ENCODE measurements at regions of chr7 and their contacts with region 1.

Region 1: DNA sequence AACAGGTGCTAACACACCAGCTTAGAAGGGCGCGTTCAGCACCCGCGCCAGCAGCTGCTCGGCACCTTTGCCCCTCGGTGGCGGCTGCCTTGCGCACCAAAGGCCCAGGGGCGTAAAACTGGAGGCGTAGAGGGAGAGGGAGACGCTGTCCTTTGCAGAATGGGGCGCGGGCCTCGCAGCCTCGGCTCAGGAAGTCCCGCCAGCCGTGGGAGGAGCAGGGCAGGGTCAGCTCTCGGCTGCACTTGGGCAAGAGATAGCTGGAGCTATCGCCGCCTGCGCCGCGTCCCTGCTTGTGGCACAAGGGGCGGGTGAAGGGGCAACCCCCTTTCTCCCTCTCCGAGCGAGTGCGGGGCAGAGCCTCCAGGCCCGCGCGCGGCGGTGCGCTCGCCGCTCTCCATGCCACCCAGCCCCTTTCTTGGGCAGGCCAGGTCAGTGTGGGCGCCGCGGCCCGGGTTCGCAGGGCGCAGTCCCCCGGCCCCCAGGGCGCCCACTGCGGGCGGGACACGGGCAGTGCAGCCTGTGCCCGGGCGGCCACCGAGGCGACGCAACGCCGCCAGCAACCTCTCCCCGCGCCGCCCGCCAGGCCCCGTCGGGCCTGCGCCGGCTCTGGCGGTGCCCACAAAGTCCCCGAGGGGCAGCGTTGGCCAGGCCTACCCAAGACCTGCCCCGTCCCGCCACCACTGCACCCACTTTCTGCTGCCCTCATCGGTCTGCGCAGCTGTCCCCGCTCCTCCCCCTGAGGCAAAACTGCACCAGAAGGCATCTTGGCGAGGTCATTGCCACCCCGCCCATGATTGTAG is 4.1 kb downstream of the NEUROD6 start:
- DNase-seq: peak in 1 of 2 experiments; percentile 87
- H3K4me3 ChIP-seq: peak overlapping the region; percentile 37 to 63 (median 53)
- H3K27ac ChIP-seq: no peak overlapping the region
- H3K4me1 ChIP-seq: no peaks in the 10 kb centered on the region
- H3K27me3 ChIP-seq: peaks cover 7 to 30% (median 18%) of the 10 kb centered on the region in 4 experiments; a peak in 6 of 7 replicates
- CTCF ChIP-seq: peak; percentile 71 to 82 (median 80)
- EP300 ChIP-seq: no peak
- POLR2A ChIP-seq: no peak
- RAD21 ChIP-seq: peak; percentile 41 to 69

Region 2: DNA sequence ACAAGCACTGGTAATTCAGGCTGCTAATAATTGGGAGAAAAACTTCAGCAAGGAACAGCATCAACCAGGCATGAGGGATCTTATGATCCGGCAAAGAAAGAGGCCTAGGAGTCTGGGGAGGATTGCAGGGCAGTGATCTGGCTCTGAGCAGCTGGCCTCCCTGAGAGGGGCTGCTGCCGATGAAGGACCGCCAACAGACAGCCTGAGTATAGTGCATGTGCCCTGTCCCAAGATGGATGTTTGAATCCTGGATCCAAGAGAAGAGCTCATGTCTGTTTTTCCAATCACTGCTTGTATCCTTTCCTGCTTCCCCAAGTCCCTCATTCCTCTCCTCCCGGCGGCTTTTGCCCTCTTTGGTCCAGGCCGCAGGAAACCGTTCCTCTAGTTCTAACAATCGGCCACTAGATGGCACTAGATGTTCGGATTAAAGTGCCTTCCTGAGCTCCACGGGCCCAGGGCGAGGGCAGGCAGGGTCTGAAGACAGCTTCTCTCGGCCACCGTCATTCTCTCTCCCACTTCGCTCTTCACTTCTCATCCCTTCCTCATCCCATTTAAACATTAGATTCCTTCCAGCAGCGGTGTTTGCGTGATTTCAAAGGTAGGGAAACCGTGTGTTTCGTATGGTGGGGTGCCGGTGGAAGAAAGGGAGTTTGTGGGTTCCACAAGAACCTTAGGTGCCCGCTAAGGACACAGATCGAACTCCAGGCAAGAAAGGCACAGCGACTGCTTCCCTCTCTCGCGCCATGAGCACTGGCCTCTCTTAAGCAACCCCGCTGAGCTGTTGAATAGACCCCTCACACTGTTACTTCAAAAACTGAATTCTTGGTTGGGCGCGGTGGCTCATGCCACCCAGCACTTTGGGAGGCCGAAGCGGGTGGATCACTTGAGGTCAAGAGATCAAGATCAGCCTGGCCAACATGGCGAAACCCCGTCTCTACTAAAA is 201.9 kb before region 1 on chr7:
- CTCF ChIA-PET with region 1: interaction called, 14 read pairs
- POLR2A ChIA-PET with region 1: no interaction called
- DNase-seq: peak; percentile 56 to 84
- H3K4me3 ChIP-seq: peak overlapping the region in 1 of 4 experiments; percentile 26; a peak in 1 of 8 replicates
- H3K27ac ChIP-seq: no peak overlapping the region
- H3K4me1 ChIP-seq: no peaks in the 10 kb centered on the region; a peak in 1 of 7 replicates
- H3K27me3 ChIP-seq: no peaks in the 10 kb centered on the region
- CTCF ChIP-seq: peak; percentile 50 to 83 (median 82)
- EP300 ChIP-seq: no peak
- POLR2A ChIP-seq: no peak
- RAD21 ChIP-seq: peak; percentile 87 to 93

Region 3: GRCh38 chr7:31192986-31193385 is 143.4 kb before region 1 on chr7:
- CTCF ChIA-PET with region 1: interaction called, 39 read pairs
- POLR2A ChIA-PET with region 1: no interaction called
- DNase-seq: peak; percentile 76 to 84
- H3K4me3 ChIP-seq: no peak overlapping the region
- H3K27ac ChIP-seq: no peak overlapping the region
- H3K4me1 ChIP-seq: no peaks in the 10 kb centered on the region
- H3K27me3 ChIP-seq: no peaks in the 10 kb centered on the region; a peak in 1 of 7 replicates
- CTCF ChIP-seq: peak; percentile 90 to 95 (median 90)
- EP300 ChIP-seq: no peak
- POLR2A ChIP-seq: no peak
- RAD21 ChIP-seq: peak; percentile 96 to 98

Region 4: GRCh38 chr7:31234836-31235605 is 101.4 kb before region 1 on chr7:
- CTCF ChIA-PET with region 1: no interaction called
- POLR2A ChIA-PET with region 1: no interaction called
- DNase-seq: no peak
- H3K4me3 ChIP-seq: no peak overlapping the region
- H3K27ac ChIP-seq: no peak overlapping the region
- H3K4me1 ChIP-seq: peaks cover 0 to 6% (median 1%) of the 10 kb centered on the region in 4 experiments; a peak in 2 of 7 replicates
- H3K27me3 ChIP-seq: no peaks in the 10 kb centered on the region
- CTCF ChIP-seq: no peak
- EP300 ChIP-seq: no peak
- POLR2A ChIP-seq: no peak
- RAD21 ChIP-seq: no peak

Region 5: DNA sequence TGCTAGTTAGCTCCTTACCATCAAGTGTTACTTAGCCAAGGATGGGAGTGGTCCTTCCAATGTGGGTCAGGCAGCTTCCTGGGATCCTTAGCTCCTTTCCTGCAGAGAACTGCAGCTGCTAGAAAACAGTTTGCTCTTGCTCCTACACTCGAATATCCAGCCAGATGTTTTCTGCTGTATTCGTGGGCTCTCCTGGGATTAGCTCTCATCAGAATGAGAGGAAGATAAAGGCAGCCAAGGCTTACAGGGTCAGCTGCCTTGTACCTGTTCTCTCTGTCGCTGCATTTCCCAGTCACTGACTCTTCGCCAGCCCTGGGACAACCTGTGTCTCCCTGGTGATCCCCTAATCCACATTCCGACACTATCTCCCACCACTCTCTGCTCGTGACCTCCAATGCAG is 24.9 kb before region 1 on chr7:
- CTCF ChIA-PET with region 1: interaction called, 15 read pairs
- POLR2A ChIA-PET with region 1: no interaction called
- DNase-seq: no peak
- H3K4me3 ChIP-seq: no peak overlapping the region
- H3K27ac ChIP-seq: no peak overlapping the region
- H3K4me1 ChIP-seq: no peaks in the 10 kb centered on the region
- H3K27me3 ChIP-seq: no peaks in the 10 kb centered on the region
- CTCF ChIP-seq: no peak
- EP300 ChIP-seq: no peak
- POLR2A ChIP-seq: no peak
- RAD21 ChIP-seq: no peak

Region 6: DNA sequence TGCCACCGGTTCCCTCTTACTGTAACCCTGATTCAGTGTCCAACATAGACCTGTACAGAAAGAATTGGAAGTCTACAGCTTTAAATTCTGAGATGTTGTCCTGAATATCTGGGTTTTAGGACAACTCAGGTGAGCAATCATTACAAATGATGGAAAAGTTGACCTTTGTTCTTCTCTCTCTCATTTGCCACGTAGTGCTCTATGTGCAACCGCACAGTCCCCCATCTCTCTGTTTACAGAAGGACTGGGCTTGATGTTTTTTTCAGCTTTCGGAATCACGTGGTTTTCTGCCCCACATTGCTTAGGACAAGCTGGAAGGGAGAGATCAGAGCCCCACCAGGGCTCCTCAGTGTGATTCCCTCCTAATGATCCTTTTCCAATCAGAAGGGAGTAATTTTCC is 18.1 kb before region 1 on chr7:
- CTCF ChIA-PET with region 1: interaction called, 25 read pairs
- POLR2A ChIA-PET with region 1: no interaction called
- DNase-seq: no peak
- H3K4me3 ChIP-seq: no peak overlapping the region
- H3K27ac ChIP-seq: no peak overlapping the region
- H3K4me1 ChIP-seq: no peaks in the 10 kb centered on the region
- H3K27me3 ChIP-seq: no peaks in the 10 kb centered on the region; a peak in 1 of 7 replicates
- CTCF ChIP-seq: no peak
- EP300 ChIP-seq: no peak
- POLR2A ChIP-seq: no peak
- RAD21 ChIP-seq: no peak

Measured in H1 (cell line).